HepG2 (cell line): ENCODE measurements at regions of chr3 and their contacts with region 1.

Region 1: GRCh38 chr3:24451461-24452099 is 43.1 kb downstream of the THRB start:
- DNase-seq: peak; percentile 99
- ATAC-seq: peak; percentile 95
- H3K4me3 ChIP-seq: peak overlapping the region; percentile 35 to 68 (median 56); a peak in 5 of 6 replicates
- H3K27ac ChIP-seq: peak overlapping the region; percentile 99
- H3K4me1 ChIP-seq: peaks cover 57% of the 10 kb centered on the region
- H3K27me3 ChIP-seq: no peaks in the 10 kb centered on the region
- CTCF ChIP-seq: peak; percentile 34; the same call in 1 of the 2 replicates
- EP300 ChIP-seq: peak; percentile 97 to 99
- POLR2A ChIP-seq: peak; percentile 63 to 96
- RAD21 ChIP-seq: no peak; the same call in 1 of the 2 replicates

Region 2: DNA sequence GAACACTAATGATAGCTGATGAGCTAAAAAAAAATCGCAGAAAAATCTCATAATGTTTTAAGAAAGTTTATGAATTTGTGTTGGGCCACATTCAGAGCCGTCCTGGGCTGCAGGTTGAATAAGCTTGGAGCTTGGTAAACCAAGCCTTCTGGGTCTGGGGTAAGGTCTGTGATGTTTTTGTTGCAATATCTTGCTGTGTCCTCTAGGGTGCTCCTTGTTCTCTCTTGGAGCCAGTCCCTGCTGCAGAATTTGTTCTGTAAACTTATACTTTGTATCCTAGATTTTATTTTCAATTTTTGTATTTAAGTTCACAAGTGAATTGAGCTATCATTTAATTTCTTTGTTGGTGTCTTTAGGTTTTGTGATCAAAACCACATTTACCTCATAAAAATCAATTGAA is 362.8 kb before region 1 on chr3:
- CTCF ChIA-PET with region 1: no interaction called
- POLR2A ChIA-PET with region 1: no interaction called
- in situ Hi-C with region 1: no loop called
- intact Hi-C with region 1: no loop called
- DNase-seq: peak; percentile 20
- ATAC-seq: peak; percentile 94
- H3K4me3 ChIP-seq: no peak overlapping the region
- H3K27ac ChIP-seq: no peak overlapping the region
- H3K4me1 ChIP-seq: peaks cover 22% of the 10 kb centered on the region
- H3K27me3 ChIP-seq: no peaks in the 10 kb centered on the region; a peak in 1 of 5 replicates
- CTCF ChIP-seq: peak; percentile 57
- EP300 ChIP-seq: no peak
- POLR2A ChIP-seq: no peak
- RAD21 ChIP-seq: 0 out of 2 replicates have a peak, but pooled peaks have one; percentile 18

Region 3: DNA sequence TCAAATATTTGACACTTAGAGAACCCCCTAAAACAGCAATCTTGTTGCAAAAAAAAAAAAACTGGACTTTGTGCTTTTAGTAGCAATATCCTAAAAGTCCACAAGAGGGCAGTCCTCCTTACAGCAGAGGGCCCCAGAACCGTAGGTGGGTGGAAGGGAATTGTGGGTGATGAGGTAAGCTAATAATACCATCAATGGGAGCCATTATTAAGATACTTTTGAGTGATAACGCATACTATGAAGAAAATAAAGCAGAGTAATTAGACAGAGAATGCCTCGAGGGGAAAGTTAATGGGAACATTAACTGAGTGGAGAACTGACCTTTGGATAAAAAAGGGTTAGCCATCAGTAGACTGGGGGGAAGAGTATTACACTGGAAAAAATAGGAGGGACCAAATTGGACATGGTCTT is 186.8 kb before region 1 on chr3:
- CTCF ChIA-PET with region 1: no interaction called
- POLR2A ChIA-PET with region 1: interaction called, 6 read pairs
- in situ Hi-C with region 1: no loop called
- intact Hi-C with region 1: loop called (anchors 5 kb)
- DNase-seq: peak; percentile 53
- ATAC-seq: peak; percentile 73
- H3K4me3 ChIP-seq: no peak overlapping the region
- H3K27ac ChIP-seq: no peak overlapping the region
- H3K4me1 ChIP-seq: peaks cover 5% of the 10 kb centered on the region; the same call in 1 of the 2 replicates
- H3K27me3 ChIP-seq: no peaks in the 10 kb centered on the region
- CTCF ChIP-seq: peak; percentile 75
- EP300 ChIP-seq: no peak
- POLR2A ChIP-seq: no peak
- RAD21 ChIP-seq: peak; percentile 83

Region 4: DNA sequence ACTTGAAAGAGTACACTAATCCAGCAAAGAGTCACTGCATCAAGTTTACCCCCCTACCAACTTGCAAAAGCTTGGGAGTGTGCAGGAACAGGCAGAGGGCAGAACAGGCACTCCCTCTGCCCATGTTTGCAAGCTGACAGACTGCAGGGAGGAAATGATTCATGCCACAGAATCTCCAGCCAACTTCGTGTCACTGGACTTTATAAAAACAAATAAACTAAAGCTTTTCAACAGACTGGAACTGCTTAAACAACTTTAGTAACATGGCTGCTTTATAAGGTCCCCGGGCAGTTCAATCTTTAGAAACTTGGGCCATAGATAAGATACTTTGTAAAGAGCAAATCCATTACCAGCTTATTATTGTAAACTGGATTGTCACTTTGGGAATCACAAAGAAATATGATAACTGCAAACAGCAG is 86.4 kb before region 1 on chr3:
- CTCF ChIA-PET with region 1: no interaction called
- POLR2A ChIA-PET with region 1: interaction called, 41 read pairs
- in situ Hi-C with region 1: no loop called
- intact Hi-C with region 1: loop called (anchors 1 kb)
- DNase-seq: peak; percentile 90
- ATAC-seq: peak; percentile 96
- H3K4me3 ChIP-seq: peak overlapping the region in 1 of 3 experiments; percentile 20; a peak in 2 of 6 replicates
- H3K27ac ChIP-seq: peak overlapping the region; percentile 71
- H3K4me1 ChIP-seq: peaks cover 78% of the 10 kb centered on the region
- H3K27me3 ChIP-seq: no peaks in the 10 kb centered on the region
- CTCF ChIP-seq: peak; percentile 51
- EP300 ChIP-seq: peak in 1 of 2 experiments; percentile 76; a peak in 2 of 4 replicates
- POLR2A ChIP-seq: no peak
- RAD21 ChIP-seq: peak; percentile 47; the same call in 1 of the 2 replicates

Region 5: GRCh38 chr3:24394754-24395153 is 56.8 kb before region 1 on chr3:
- CTCF ChIA-PET with region 1: no interaction called
- POLR2A ChIA-PET with region 1: interaction called, 25 read pairs
- in situ Hi-C with region 1: no loop called
- intact Hi-C with region 1: loop called (anchors 2 kb)
- DNase-seq: no peak
- ATAC-seq: no peak
- H3K4me3 ChIP-seq: no peak overlapping the region
- H3K27ac ChIP-seq: peak overlapping the region; percentile 33
- H3K4me1 ChIP-seq: peaks cover 33% of the 10 kb centered on the region
- H3K27me3 ChIP-seq: no peaks in the 10 kb centered on the region
- CTCF ChIP-seq: no peak
- EP300 ChIP-seq: no peak
- POLR2A ChIP-seq: no peak
- RAD21 ChIP-seq: no peak

Region 6: GRCh38 chr3:24433838-24434591 is 17.6 kb before region 1 on chr3:
- CTCF ChIA-PET with region 1: no interaction called
- POLR2A ChIA-PET with region 1: interaction called, 19 read pairs
- in situ Hi-C with region 1: no loop called
- intact Hi-C with region 1: no loop called
- DNase-seq: peak; percentile 31
- ATAC-seq: peak; percentile 87
- H3K4me3 ChIP-seq: no peak overlapping the region; a peak in 1 of 6 replicates
- H3K27ac ChIP-seq: peak overlapping the region; percentile 9
- H3K4me1 ChIP-seq: peaks cover 56% of the 10 kb centered on the region
- H3K27me3 ChIP-seq: no peaks in the 10 kb centered on the region
- CTCF ChIP-seq: no peak
- EP300 ChIP-seq: no peak
- POLR2A ChIP-seq: no peak
- RAD21 ChIP-seq: no peak

Region 7: GRCh38 chr3:24494618-24495325 is 43.2 kb after region 1 on chr3 and contains the start of gene THRB:
- CTCF ChIA-PET with region 1: interaction called, 4 read pairs
- POLR2A ChIA-PET with region 1: interaction called, 86 read pairs
- in situ Hi-C with region 1: no loop called
- intact Hi-C with region 1: loop called (anchors 1 kb)
- DNase-seq: peak; percentile 56
- ATAC-seq: peak; percentile 82
- H3K4me3 ChIP-seq: peak within 1 kb of the TSS; percentile 83 to 96 (median 92)
- H3K27ac ChIP-seq: peak within 1 kb of the TSS; percentile 93
- H3K4me1 ChIP-seq: peaks cover 41% of the 10 kb centered on the region
- H3K27me3 ChIP-seq: no peaks in the 10 kb centered on the region; a peak in 1 of 5 replicates
- CTCF ChIP-seq: no peak
- EP300 ChIP-seq: no peak
- POLR2A ChIP-seq: peak in 1 of 2 experiments; percentile 37; a peak in 1 of 4 replicates
- RAD21 ChIP-seq: peak; percentile 60
- total RNA-seq, gene THRB: 22.7 and 30.1 TPM in 2 replicates

Region 8: GRCh38 chr3:24591661-24592522 is 140.3 kb after region 1 on chr3:
- CTCF ChIA-PET with region 1: no interaction called
- POLR2A ChIA-PET with region 1: no interaction called
- in situ Hi-C with region 1: no loop called
- intact Hi-C with region 1: no loop called
- DNase-seq: no peak
- ATAC-seq: no peak
- H3K4me3 ChIP-seq: no peak overlapping the region
- H3K27ac ChIP-seq: no peak overlapping the region
- H3K4me1 ChIP-seq: peaks cover 5% of the 10 kb centered on the region; the same call in 1 of the 2 replicates
- H3K27me3 ChIP-seq: no peaks in the 10 kb centered on the region
- CTCF ChIP-seq: no peak
- EP300 ChIP-seq: no peak
- POLR2A ChIP-seq: no peak
- RAD21 ChIP-seq: no peak